ENCODE measurements at regions of chr20 and their contacts with region 1.

Region 1: DNA sequence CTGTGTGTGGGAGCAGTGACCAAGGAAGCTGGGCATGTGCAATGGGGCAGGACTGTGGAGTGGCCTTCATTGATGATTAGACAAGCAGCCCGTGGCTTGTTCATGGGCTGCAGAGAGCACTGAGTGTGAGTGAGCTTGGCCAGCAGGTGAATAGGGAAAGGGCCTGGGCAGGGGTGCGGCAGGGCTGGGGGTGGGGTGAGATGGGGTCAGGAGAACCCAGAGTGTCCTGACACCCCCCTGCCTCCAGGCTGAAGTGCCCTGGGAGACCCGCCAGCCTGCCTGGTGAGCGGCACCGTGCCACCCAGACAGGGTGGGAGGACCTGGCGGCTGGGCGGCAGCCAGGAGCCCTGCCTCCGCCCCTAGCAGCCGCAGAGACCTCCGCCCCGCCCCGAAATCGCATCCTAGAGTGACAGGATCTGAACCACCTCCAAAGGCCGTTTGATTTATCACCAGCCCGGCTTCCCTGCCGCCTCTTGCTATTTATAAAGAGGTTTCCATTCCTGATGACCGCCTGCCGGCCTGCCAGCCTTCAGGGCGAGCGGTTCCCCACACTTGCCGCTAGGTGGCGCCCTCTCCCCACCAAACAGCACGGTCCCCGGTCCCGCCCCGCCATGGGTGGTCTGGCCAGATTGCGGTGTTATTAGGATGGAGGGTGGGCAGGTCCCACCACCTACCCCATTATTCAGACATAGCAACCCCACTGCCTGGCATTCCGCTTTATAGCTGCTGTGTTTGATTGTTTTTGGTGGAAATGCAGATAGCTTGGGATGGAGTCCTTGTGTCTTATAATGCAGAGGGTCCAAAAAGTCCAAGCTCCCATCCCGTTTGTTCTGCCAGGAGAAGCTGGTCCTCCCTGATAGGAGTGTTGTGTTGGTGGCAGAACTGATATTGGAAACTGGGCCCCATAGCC is 3.5 kb downstream of the MYLK2 start:
- DNase-seq: peak; percentile 89
- H3K4me3 ChIP-seq: peak overlapping the region in 2 of 4 donors; percentile 23 to 29
- H3K27ac ChIP-seq: peak overlapping the region in 3 of 4 donors; percentile 21 to 41 (median 23)
- H3K4me1 ChIP-seq: peaks cover 0 to 13% (median 9%) of the 10 kb centered on the region in 4 donors
- H3K27me3 ChIP-seq: no peaks in the 10 kb centered on the region
- CTCF ChIP-seq: peak; percentile 95 to 98 (median 97)
- EP300 ChIP-seq: no peak
- POLR2A ChIP-seq: no peak

Region 2: DNA sequence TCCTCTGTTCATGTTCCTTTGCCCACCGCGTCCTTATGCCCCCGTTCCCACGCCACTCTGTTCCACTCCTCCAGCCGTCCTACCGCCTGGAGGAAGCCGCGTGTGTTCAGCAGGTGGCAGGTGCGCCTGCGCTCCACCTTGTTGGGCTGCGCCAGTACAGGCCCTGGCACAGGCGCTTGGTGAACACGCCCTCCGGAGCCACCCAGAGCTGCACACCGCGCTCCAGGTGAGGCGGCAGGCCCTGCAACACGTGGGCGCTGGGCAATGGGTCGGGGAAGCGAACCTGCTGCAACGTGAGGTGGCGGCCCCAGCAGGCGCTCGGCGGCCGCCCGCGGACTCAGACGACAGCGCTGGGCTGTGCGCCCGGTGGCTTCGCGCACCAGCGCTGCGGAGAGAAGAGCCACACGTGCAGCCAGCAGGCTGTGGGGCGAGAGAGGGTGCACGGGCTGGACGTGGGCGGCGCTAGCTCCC is 26.8 kb after region 1 on chr20:
- intact Hi-C with region 1: loop called (anchors 1 kb)
- DNase-seq: no peak
- H3K4me3 ChIP-seq: no peak overlapping the region
- H3K27ac ChIP-seq: no peak overlapping the region
- H3K4me1 ChIP-seq: peaks cover 0 to 7% (median 0%) of the 10 kb centered on the region in 4 donors
- H3K27me3 ChIP-seq: peaks cover 4 to 37% (median 10%) of the 10 kb centered on the region in 3 donors
- CTCF ChIP-seq: no peak
- EP300 ChIP-seq: no peak
- POLR2A ChIP-seq: no peak

Region 3: DNA sequence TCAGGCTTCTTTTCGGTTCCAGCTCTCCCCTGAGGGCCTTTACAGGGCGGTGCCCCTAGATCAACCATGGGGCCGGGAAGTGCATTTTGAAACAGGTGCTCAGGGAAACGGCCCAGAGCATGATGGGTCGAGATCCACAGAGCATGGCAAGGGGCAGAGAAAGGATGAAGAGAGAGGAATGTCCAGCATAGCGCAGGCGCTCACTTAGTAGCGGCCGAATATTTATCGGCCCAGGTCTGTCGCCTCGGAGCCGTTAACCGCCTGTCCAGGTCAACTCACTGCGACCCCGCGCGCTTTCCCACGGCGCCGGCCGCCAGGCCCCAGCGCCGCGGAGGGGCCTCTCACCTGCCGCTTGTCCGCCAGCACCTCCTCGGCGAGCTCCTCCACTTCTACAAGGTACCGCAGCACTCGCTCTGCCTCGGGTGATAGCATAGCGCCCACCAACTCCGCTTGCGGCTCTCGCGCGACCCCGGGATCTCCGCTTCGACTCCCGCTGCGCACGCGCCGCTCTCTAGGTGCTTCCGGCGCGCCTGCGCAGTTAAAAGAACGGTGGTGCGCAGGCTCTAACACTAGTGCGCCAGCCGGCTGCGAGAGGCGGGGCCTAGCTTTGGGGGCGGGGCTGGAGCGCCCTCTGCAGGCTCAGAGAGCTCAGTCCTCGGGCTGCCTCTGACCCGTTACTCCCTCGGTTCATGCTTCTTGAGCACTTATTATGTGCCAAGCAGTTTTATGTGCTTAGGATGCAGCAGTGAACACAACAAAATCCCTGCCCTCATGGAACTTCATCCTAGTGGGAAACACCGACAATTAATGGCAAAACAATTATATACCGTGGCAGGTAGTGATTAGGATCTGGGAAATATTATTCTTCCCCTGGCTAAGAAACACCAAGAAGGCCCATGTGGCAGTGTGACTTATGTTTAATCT is 129.1 kb after region 1 on chr20 and contains the start of gene PDRG1:
- intact Hi-C with region 1: loop called (anchors 1 kb)
- DNase-seq: peak; percentile 97
- H3K4me3 ChIP-seq: peak within 1 kb of the TSS; percentile 72 to 99 (median 80)
- H3K27ac ChIP-seq: peak within 1 kb of the TSS; percentile 75 to 84 (median 80)
- H3K4me1 ChIP-seq: peaks cover 0 to 17% (median 15%) of the 10 kb centered on the region in 4 donors
- H3K27me3 ChIP-seq: peaks cover 0 to 6% (median 4%) of the 10 kb centered on the region in 3 donors
- CTCF ChIP-seq: peak; percentile 78 to 88 (median 86)
- EP300 ChIP-seq: no peak
- POLR2A ChIP-seq: peak in 1 of 2 donors; percentile 35
- total RNA-seq, gene PDRG1: 5.0 to 13.7 (median 7.3) TPM

Region 4: DNA sequence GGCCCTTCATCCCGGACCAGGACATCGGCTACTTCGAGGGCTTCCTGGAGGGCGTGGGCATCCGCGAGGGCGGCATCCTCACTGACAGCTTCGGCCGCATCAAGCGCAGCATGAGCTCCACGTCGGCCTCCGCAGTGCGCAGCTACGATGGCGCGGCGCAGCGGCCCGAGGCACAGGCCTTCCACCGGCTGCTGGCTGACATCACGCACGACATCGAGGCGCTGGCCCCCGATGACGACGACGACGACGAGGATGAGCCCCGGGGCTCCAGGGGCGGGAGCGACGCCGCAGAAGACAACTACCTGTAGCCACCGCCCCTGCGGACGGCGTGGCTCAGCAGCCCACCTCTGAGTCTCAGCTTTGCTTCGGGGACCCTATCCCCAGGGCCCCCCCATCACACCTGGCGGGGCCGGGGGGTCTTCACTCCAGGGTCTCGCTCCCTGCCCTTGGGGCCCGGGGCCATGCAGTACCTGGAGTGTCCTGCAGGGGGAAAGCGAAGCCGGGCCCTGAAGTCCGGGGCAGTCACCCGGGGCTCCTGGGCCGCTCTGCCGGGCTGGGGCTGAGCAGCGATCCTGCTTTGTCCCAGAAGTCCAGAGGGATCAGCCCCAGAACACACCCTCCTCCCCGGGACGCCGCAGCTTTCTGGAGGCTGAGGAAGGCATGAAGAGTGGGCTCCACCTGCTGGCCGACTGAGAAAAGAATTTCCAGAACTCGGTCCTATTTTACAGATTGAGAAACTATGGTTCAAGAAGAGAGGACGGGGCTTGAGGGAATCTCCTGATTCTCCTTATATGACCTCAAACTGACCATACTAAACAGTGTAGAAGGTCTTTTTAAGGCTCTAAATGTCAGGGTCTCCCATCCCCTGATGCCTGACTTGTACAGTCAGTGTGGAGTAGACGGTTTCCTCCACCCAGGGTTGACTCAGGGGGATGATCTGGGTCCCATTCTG is 208.6 kb after region 1 on chr20:
- intact Hi-C with region 1: loop called (anchors 1 kb)
- DNase-seq: peak; percentile 84
- H3K4me3 ChIP-seq: peak overlapping the region in 3 of 4 donors; percentile 14 to 33 (median 29)
- H3K27ac ChIP-seq: no peak overlapping the region
- H3K4me1 ChIP-seq: peaks cover 0 to 10% (median 8%) of the 10 kb centered on the region in 4 donors
- H3K27me3 ChIP-seq: peaks cover 12 to 59% (median 35%) of the 10 kb centered on the region in 3 donors
- CTCF ChIP-seq: peak; percentile 66 to 84 (median 80)
- EP300 ChIP-seq: no peak
- POLR2A ChIP-seq: no peak

Region 5: DNA sequence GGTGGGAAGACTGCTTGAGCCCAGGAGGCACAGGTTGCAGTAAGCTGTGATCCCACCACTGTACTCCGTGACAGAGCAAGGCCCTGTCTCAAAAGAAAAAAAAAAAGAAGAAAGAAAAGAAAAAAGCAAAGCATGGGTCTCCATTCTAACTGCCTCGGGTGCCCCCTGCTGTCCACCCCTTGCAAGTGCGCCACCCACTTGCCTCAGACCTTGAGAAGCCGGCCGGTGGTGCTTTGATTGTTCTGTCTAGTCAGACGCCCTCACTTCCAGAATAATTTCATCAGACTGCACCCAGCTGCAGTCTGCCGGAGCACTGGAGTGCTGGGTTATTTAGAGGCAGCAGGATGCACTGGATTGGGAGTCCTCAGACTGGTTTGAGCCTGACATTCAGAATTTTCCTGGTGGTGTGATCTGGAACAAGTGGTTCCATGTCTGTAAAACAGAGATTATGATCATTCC is 269.2 kb after region 1 on chr20:
- intact Hi-C with region 1: loop called (anchors 5 kb)
- DNase-seq: peak; percentile 78
- H3K4me3 ChIP-seq: no peak overlapping the region
- H3K27ac ChIP-seq: no peak overlapping the region
- H3K4me1 ChIP-seq: no peaks in the 10 kb centered on the region
- H3K27me3 ChIP-seq: peaks cover 0 to 5% (median 0%) of the 10 kb centered on the region in 3 donors
- CTCF ChIP-seq: peak in 3 of 4 experiments; percentile 40 to 88 (median 52)
- EP300 ChIP-seq: no peak
- POLR2A ChIP-seq: no peak

Measured in sigmoid colon (tissue), 7 donors.